KBM-7 (cell line): ENCODE measurements at regions of chr11 and their contacts with region 1.

Region 1: GRCh38 chr11:60607483-60607882 is 91.9 kb upstream of the MS4A8 start:
- DNase-seq: no peak

Region 2: GRCh38 chr11:60363542-60364510 is 243.7 kb before region 1 on chr11:
- in situ Hi-C with region 1: loop called (anchors 25 kb)
- DNase-seq: peak; percentile 95

Region 3: GRCh38 chr11:60932605-60933356 is 325.3 kb after region 1 on chr11:
- in situ Hi-C with region 1: no loop called
- DNase-seq: no peak